Ovary (tissue), 10 donors: ENCODE measurements at regions of chr14 and their contacts with region 1.

Region 1: DNA sequence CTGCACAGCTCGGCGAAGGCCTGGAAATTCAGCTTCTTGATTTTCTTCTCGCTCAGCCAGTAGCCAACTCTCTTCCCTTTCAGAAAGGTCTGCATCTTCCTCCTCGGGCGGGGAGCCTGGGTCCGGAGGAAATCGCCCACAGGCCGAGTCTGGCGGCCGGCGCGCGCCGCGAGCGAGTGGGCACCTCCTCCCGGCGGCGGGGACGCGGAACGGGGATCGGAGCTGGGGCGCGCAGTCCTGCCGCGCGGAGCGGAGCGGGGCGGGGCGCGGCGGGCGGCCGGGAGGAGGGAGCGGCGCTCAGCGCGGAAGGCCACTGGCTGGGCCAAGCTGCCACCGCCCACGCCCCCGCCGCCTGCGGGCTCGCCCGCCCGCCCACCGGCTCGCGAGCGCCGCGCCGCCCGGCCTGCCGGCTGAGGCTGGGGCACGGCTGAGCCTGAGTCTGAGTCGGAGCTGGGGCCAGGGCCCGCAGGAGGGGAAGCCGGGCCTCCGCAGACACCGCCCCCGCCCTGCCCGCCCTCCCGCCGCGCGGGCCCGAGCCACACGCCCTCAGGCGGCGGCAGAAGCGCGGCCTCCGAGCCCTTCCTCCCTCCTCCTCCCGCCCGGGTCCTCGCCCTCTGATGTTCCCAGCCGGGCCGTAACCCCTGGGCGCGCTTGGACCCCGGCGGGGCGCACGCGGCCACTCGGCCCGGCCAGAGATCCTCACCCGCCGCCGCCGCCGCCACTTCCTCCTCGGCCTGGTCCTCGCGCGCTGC is 480 bp downstream of the ITPK1 start:
- DNase-seq: peak; percentile 83 to 90 (median 87)
- H3K4me3 ChIP-seq: peak overlapping the region; percentile 68
- H3K27ac ChIP-seq: peak overlapping the region; percentile 98 to 99
- H3K4me1 ChIP-seq: peaks cover 12% of the 10 kb centered on the region
- H3K27me3 ChIP-seq: no peaks in the 10 kb centered on the region
- CTCF ChIP-seq: peak in 1 of 3 donors; percentile 7
- EP300 ChIP-seq: no peak
- POLR2A ChIP-seq: no peak

Region 2: DNA sequence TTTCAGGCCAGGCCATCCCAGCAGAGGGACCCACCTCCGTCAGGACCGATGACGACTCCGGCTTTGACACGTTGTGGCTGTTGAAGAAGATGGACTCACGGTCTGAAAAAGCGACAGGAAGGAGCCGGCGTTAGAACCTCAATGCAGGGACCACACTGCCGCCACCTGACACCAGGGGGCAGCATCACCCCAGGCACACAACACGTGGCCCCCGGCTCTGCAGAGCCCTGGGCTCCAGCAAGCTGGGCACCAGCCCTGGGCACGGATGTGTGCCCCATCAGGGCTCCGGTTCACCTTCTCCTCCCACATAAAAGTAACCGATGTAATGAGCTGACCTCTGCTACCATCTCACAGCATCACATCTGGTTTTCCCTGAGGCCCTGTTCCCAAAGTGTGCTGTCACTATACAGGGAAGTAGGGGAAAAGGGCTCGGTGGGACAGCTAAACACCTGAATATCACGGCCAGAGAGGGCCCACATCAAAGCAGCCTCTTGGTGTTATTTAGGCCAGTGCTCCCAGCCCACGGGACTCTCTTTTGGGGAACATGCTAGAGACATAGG is 163.3 kb before region 1 on chr14:
- intact Hi-C with region 1: loop called in 1 of 4 experiments (anchors 10 kb)
- DNase-seq: peak; percentile 62 to 87 (median 80)
- H3K4me3 ChIP-seq: no peak overlapping the region
- H3K27ac ChIP-seq: no peak overlapping the region
- H3K4me1 ChIP-seq: no peaks in the 10 kb centered on the region
- H3K27me3 ChIP-seq: no peaks in the 10 kb centered on the region
- CTCF ChIP-seq: peak; percentile 78 to 93 (median 90)
- EP300 ChIP-seq: no peak
- POLR2A ChIP-seq: no peak

Region 3: GRCh38 chr14:92973261-92973797 is 141.9 kb before region 1 on chr14:
- intact Hi-C with region 1: loop called in 1 of 4 experiments (anchors 5 kb)
- DNase-seq: peak; percentile 62 to 88 (median 73)
- H3K4me3 ChIP-seq: no peak overlapping the region
- H3K27ac ChIP-seq: no peak overlapping the region
- H3K4me1 ChIP-seq: no peaks in the 10 kb centered on the region
- H3K27me3 ChIP-seq: no peaks in the 10 kb centered on the region
- CTCF ChIP-seq: peak; percentile 35 to 73 (median 46)
- EP300 ChIP-seq: no peak
- POLR2A ChIP-seq: no peak

Region 4: DNA sequence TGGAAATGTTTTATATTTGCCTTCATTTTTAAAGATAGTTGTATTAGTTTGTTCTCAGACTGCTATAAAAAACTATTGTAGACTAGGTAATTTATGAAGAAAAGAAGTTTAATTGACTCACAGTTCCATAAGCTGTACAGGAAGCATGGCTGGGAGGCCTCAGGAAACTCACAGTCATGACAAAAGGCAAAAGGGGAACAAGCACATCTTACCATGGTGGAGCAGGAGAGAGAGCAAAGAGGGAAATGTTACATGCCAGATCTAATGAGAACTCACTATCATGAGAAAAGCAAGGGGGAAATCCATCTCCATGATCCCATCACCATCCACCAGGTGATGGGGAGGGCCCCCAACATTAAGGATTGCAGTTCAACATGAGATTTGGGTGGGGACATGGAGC is 280.0 kb after region 1 on chr14:
- intact Hi-C with region 1: no loop called
- DNase-seq: no peak
- H3K4me3 ChIP-seq: no peak overlapping the region
- H3K27ac ChIP-seq: no peak overlapping the region
- H3K4me1 ChIP-seq: no peaks in the 10 kb centered on the region
- H3K27me3 ChIP-seq: no peaks in the 10 kb centered on the region
- CTCF ChIP-seq: no peak
- EP300 ChIP-seq: no peak
- POLR2A ChIP-seq: no peak